Heart left ventricle (tissue), 16 donors: ENCODE measurements at regions of chr6 and their contacts with region 1.

Region 1: DNA sequence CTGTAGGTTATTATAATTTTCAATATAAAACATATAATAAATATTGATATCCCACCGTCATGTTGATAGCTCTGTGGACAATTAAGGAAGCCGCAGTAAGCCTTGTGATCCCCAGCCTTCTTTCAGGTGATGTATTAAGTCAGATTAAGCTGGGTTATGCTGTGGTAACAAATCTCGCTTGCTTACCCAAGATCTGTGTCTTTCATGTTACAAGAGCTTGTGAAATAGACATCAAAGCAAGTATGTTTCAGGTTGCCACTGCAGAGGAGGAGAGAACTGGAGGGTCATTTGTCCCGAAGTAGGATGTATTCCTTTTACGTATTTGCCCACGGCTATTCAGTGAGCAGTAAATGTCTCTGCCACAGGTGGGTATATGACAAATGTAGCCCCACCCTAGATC is 17.8 kb upstream of the BCKDHB start:
- DNase-seq: no peak
- ATAC-seq: no peak
- H3K4me3 ChIP-seq: no peak overlapping the region
- H3K27ac ChIP-seq: no peak overlapping the region
- H3K4me1 ChIP-seq: no peaks in the 10 kb centered on the region
- H3K27me3 ChIP-seq: no peaks in the 10 kb centered on the region
- CTCF ChIP-seq: no peak
- POLR2A ChIP-seq: no peak

Region 2: GRCh38 chr6:79954849-79955248 is 133.8 kb before region 1 on chr6:
- intact Hi-C with region 1: loop called in 1 of 10 experiments (anchors 10 kb)
- DNase-seq: no peak
- ATAC-seq: no peak
- H3K4me3 ChIP-seq: no peak overlapping the region
- H3K27ac ChIP-seq: no peak overlapping the region
- H3K4me1 ChIP-seq: no peaks in the 10 kb centered on the region
- H3K27me3 ChIP-seq: no peaks in the 10 kb centered on the region
- CTCF ChIP-seq: no peak
- POLR2A ChIP-seq: no peak